HAP-1 (cell line): ENCODE measurements at regions of chr6 and their contacts with region 1.

Region 1: GRCh38 chr6:50791900-50792508 is 26.7 kb upstream of the TFAP2B start:
- DNase-seq: peak; percentile 28 to 34
- H3K4me3 ChIP-seq: no peak overlapping the region
- H3K4me1 ChIP-seq: no peaks in the 10 kb centered on the region
- H3K27me3 ChIP-seq: no peaks in the 10 kb centered on the region

Region 2: DNA sequence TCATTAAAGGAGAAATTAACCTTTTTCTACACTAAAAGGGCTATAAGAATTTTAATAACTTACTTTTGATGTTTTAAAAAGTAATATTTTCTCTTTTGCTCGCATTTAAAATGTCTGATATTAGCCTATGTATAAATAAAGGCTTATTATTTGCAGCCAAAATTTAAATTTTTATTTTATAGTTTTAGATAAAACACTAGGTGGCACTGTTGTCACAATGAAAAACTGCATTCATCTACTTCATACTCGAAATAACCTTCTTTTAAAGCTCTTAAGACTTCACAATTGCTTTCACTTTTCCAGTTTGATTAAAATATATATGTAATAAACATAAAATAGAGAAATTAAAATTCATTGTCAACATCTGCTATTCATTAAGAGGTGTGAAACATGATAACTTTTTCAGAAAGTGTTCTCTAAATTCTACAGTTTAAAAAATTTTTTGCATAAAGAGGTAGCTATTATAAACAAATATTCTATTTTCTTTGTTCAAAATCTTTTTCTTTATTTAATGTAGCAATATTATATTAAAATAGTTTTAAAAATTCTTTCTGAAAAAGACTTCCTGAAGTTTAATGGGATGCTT is 663.5 kb before region 1 on chr6:
- in situ Hi-C with region 1: loop called (anchors 25 kb)
- DNase-seq: peak in 1 of 2 experiments; percentile 33
- H3K4me3 ChIP-seq: no peak overlapping the region
- H3K4me1 ChIP-seq: no peaks in the 10 kb centered on the region
- H3K27me3 ChIP-seq: no peaks in the 10 kb centered on the region

Region 3: GRCh38 chr6:50850223-50851048 is 58.4 kb after region 1 on chr6:
- in situ Hi-C with region 1: no loop called
- DNase-seq: no peak
- H3K4me3 ChIP-seq: no peak overlapping the region
- H3K4me1 ChIP-seq: no peaks in the 10 kb centered on the region
- H3K27me3 ChIP-seq: peaks cover 41% of the 10 kb centered on the region